Adrenal gland (tissue), 19 donors: ENCODE measurements at regions of chr10 and their contacts with region 1.

Region 1: DNA sequence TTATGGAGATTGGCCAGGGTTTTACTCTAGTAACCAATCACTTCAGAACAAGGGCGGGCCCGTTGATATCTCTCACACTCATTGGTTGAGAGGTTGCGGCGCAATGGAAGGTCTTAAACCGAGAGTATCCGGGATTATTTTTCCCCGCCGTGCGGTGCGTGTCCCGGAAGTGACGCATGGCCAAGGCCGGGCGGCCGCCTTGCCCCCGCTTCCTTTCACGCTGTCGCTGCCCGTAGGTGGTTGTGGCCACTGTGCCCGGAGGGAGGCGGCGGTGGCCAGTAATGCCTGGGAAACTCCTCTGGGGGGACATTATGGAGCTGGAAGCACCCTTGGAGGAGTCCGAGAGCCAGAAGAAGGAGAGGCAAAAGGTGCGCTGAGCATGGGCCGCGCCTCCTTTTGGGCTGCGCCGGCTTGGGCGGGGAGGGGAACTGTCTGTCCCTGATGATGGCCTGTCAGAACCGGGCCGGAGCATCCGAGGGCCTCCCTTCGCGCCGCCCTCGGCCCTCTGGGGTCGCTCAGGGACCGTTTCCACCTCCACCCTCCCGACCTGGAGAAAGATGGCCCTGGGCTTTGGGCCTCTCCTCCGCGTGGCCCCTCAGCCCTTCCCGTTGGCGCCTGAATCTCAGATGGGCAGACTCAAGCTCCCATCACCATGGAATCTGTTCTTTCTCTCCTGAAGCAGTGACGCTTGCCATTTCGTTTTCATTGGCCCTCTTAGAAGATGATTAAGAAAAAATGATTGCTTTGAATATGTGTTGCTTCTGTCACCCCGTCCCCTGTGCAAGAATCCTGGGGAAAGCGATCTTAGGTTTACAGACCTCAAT is at the start of gene DDX50:
- DNase-seq: peak; percentile 98 to 100 (median 99)
- H3K4me3 ChIP-seq: peak within 1 kb of the TSS; percentile 67 to 94 (median 86)
- H3K27ac ChIP-seq: peak within 1 kb of the TSS; percentile 93 to 100 (median 99)
- H3K4me1 ChIP-seq: peaks cover 4 to 20% of the 10 kb centered on the region in 2 donors
- H3K27me3 ChIP-seq: no peaks in the 10 kb centered on the region
- CTCF ChIP-seq: peak in 4 of 6 experiments; percentile 12 to 42 (median 35)
- POLR2A ChIP-seq: peak; percentile 81
- total RNA-seq, gene DDX50: 14.2 to 45.3 (median 31.4) TPM

Region 2: DNA sequence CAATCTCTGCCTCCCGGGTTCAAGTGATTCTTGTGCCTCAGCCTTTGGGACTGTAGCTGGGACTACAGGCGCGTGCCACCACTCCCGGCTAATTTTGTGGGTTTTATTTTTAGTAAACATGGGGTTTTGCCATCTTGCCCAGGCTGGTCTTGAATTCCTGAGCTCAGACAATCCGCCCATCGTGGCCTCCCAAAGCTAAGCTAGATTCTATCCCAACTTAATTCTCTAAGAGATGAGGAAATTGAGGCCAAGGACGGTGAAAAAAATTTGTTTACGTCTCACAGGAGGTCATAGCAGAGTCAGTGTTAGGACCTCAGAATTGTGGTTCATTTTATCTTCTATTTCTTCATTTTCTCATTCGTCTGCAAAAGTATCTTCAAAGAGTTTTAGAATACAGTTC is 174.2 kb before region 1 on chr10:
- intact Hi-C with region 1: no loop called
- DNase-seq: peak in 1 of 7 donors; percentile 32
- H3K4me3 ChIP-seq: no peak overlapping the region
- H3K27ac ChIP-seq: peak overlapping the region in 3 of 5 donors; percentile 19 to 24 (median 22)
- H3K4me1 ChIP-seq: peaks cover 9 to 22% of the 10 kb centered on the region in 2 donors
- H3K27me3 ChIP-seq: no peaks in the 10 kb centered on the region
- CTCF ChIP-seq: no peak
- POLR2A ChIP-seq: no peak

Region 3: GRCh38 chr10:68792115-68792514 is 109.2 kb before region 1 on chr10:
- intact Hi-C with region 1: loop called (anchors 5 kb)
- DNase-seq: no peak
- H3K4me3 ChIP-seq: no peak overlapping the region
- H3K27ac ChIP-seq: no peak overlapping the region
- H3K4me1 ChIP-seq: no peaks in the 10 kb centered on the region
- H3K27me3 ChIP-seq: no peaks in the 10 kb centered on the region
- CTCF ChIP-seq: peak in 3 of 6 experiments; percentile 36 to 46 (median 38)
- POLR2A ChIP-seq: no peak

Region 4: DNA sequence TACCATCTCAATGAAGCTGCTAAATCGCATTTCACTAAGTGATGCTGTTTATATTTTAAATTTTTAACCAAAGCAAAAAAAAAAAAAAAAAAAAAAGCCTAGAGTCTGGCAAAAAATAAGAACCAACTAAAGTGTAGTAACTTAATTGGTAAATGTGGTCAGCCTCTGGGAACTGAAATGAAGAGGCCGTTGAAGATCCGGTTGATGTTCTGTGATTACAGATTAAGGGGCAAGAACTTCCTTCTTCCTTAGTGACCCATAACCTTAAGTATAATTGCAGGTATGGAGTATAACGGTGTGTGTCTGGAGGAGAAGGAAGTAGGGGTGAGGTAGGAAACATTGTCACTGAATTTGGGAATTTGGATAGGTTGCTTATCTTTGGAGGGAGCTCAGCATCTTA is 178.9 kb after region 1 on chr10:
- intact Hi-C with region 1: loop called in 1 of 2 experiments (anchors 5 kb)
- DNase-seq: no peak
- H3K4me3 ChIP-seq: no peak overlapping the region
- H3K27ac ChIP-seq: no peak overlapping the region
- H3K4me1 ChIP-seq: no peaks in the 10 kb centered on the region
- H3K27me3 ChIP-seq: no peaks in the 10 kb centered on the region
- CTCF ChIP-seq: no peak
- POLR2A ChIP-seq: no peak